Heart left ventricle (tissue), 16 donors: ENCODE measurements at regions of chr7 and their contacts with region 1.

Region 1: GRCh38 chr7:44650772-44651171 is 44.3 kb downstream of the OGDH start:
- DNase-seq: peak in 4 of 5 donors; percentile 67 to 87 (median 73)
- ATAC-seq: peak; percentile 88 to 94 (median 92)
- H3K4me3 ChIP-seq: no peak overlapping the region
- H3K27ac ChIP-seq: peak overlapping the region; percentile 48 to 90 (median 79)
- H3K4me1 ChIP-seq: peaks cover 0 to 38% (median 12%) of the 10 kb centered on the region in 12 donors
- H3K27me3 ChIP-seq: no peaks in the 10 kb centered on the region
- CTCF ChIP-seq: peak in 1 of 12 donors; percentile 8
- POLR2A ChIP-seq: no peak

Region 2: GRCh38 chr7:44693721-44694285 is 43.0 kb after region 1 on chr7:
- intact Hi-C with region 1: loop called in 2 of 10 experiments (anchors 2 to 5 kb)
- DNase-seq: peak; percentile 43 to 94 (median 76)
- ATAC-seq: peak; percentile 95 to 97 (median 96)
- H3K4me3 ChIP-seq: no peak overlapping the region
- H3K27ac ChIP-seq: peak overlapping the region; percentile 9 to 89 (median 70)
- H3K4me1 ChIP-seq: peaks cover 0 to 16% (median 2%) of the 10 kb centered on the region in 12 donors
- H3K27me3 ChIP-seq: no peaks in the 10 kb centered on the region
- CTCF ChIP-seq: no peak
- POLR2A ChIP-seq: peak in 1 of 2 donors; percentile 43